Activated CD4-positive, alpha-beta memory T cell treated with anti-CD3 and anti-CD28 coated beads for 36 hours (primary cell): ENCODE measurements at regions of chr5 and their contacts with region 1.

Region 1: DNA sequence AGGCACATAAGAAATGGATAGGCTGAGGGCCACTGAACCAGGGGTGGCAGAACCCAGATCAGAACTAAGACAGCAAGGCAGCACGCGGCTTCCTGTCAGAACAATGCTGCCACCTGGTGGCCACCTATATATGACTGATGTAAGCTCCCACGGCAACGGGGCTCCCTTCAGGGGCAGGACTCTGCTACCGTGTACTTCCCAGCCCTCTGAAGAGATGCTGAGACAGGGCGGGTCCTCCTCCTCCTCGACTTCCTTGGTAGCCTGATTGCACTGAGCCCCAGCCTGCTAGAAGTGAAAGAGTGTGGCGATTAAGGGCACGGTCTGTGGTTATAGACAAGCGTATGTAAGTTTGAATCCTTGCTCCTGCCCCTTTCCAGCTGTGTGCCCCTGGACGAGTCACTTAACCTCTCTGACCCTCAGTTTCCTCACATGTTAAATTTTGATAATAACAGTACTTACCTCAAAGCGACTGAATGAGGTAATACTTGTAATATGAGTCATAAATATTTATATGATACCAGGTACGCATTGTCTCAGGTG is 13.3 kb downstream of the RPS14 start:
- DNase-seq: peak; percentile 92
- H3K4me3 Mint-ChIP-seq: no peak overlapping the region
- H3K27ac Mint-ChIP-seq: peak overlapping the region; percentile 46
- H3K4me1 Mint-ChIP-seq: peaks cover 9% of the 10 kb centered on the region
- H3K27me3 Mint-ChIP-seq: no peaks in the 10 kb centered on the region

Region 2: DNA sequence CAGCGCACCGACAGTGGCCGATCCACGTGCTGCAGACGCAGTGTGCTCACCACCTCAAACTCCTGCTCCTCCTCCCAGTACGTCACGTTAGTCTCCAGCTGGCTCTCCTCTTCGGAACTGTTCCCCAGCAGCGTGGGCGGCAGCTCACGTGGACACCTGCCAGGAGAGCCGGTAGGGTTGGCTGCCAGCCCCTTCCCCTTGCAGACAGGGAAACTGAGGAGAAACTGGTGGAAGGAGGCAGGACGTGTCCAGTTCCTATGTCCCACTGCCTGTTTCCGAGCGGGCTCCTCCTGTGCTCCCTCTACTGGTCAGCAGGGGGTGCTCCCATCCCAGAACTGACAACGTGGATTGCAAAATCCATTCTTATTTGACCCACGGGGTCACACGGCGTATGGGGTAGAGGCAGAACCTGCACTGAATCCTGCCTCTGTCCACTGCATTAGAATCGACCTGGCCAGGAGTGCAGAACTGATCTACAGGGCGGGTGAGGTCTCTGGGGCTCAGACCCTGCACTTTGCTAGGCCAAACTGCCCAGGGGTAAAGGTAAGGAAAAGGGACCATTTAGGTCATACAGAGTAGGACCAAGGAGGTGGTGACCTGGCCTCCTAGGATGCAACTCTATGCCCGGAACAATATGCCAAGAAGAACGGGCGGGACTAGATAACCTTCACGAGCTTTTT is 306.3 kb before region 1 on chr5:
- CTCF ChIA-PET with region 1: no interaction called
- POLR2A ChIA-PET with region 1: no interaction called
- intact Hi-C with region 1: loop called (anchors 1 kb)
- DNase-seq: peak; percentile 68
- H3K4me3 Mint-ChIP-seq: no peak overlapping the region
- H3K27ac Mint-ChIP-seq: no peak overlapping the region
- H3K4me1 Mint-ChIP-seq: no peaks in the 10 kb centered on the region
- H3K27me3 Mint-ChIP-seq: no peaks in the 10 kb centered on the region

Region 3: GRCh38 chr5:150217873-150218692 is 218.1 kb before region 1 on chr5:
- CTCF ChIA-PET with region 1: interaction called, 5 read pairs
- POLR2A ChIA-PET with region 1: no interaction called
- intact Hi-C with region 1: loop called (anchors 2 kb)
- DNase-seq: peak; percentile 87
- H3K4me3 Mint-ChIP-seq: no peak overlapping the region
- H3K27ac Mint-ChIP-seq: no peak overlapping the region
- H3K4me1 Mint-ChIP-seq: no peaks in the 10 kb centered on the region
- H3K27me3 Mint-ChIP-seq: peaks cover 4% of the 10 kb centered on the region

Region 4: DNA sequence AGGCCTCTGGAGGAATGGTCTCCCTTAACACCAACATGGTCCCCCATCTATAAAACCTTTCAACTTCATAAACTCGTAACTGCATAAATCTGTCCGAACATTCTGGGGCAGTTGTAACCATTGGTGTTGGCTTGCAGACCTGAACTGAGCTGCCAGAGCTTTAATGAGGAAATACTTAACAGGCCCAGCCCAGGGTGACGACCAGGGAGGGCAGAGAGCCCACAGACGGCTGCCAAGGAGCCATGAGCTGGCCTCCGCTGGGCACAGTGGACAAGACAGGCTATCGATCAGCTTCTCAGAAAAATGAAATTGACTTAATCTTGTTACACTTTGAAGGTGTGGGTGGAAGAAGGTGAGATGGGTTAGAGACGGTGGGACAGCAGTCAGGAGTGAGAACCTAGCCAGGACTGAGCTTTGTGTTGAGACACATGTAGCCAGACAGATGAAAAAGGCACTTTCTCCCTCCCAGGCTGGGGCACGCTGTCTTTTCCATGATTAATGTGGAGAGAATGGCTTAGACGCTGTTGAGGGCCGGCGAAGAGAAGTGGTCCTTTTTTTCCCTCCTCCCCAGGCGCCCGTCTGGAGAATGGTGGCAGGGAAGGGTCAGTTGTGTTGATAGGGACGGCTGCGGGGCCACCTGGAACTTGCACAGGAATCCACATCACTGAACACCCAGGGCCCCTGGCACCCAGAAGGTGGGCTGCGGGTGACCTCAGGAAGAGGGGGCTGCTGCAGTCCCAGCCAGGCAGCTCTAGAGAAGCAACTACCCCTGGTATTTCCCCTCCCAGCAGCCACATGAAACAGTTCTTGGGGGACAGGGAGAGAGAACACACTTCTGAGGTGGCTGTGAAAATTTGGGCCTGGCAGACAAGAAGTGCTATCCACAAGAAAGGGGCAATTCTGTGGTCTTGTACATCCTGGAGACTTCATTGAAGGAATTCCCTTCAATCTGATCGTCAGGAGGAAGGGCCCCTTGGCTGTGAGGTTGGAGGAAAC is 106.0 kb before region 1 on chr5:
- CTCF ChIA-PET with region 1: no interaction called
- POLR2A ChIA-PET with region 1: no interaction called
- intact Hi-C with region 1: no loop called
- DNase-seq: no peak
- H3K4me3 Mint-ChIP-seq: no peak overlapping the region
- H3K27ac Mint-ChIP-seq: no peak overlapping the region
- H3K4me1 Mint-ChIP-seq: no peaks in the 10 kb centered on the region
- H3K27me3 Mint-ChIP-seq: no peaks in the 10 kb centered on the region

Region 5: DNA sequence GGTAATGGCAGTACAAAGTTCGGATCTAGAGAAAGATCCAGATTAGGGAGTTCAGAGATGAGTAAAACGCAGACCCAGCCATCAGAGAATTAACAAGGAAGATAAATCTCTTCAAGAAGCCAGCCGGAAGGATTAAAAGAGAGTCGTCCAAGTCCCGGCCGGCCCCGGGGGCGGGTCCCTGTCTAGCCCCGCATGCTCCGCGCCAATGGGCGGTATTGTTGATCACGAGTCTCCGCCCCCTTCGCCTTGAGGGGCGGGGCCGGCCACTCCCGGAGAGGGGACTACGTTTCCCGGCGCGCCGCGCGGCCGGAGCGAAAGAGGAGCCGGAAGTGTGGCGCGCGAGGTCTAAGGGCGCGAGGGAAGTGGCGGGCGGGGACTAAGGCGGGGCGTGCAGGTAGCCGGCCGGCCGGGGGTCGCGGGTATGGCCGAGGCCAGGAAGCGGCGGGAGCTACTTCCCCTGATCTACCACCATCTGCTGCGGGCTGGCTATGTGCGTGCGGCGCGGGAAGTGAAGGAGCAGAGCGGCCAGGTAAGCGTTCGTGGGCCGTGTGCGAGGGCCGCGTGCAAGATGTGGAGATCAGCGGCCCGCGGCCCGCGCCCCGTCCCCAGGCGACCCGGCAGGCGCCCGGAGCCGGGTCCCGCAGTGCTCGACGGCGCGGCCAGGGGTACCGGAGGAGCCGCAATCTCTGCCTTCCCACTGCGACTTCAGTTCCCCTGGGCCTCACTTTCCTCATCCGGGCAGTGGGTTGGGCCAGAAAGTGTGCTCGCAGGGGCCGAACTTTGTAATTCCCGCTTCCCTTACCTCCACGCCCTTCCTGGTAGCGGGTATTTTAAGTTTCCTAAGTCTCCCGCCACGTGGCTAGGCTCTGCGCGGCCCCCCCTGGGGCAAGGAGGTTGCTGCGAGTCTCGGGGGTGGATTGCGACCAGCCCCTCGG is 78.6 kb before region 1 on chr5 and contains the start of gene TCOF1:
- CTCF ChIA-PET with region 1: interaction called, 4 read pairs
- POLR2A ChIA-PET with region 1: no interaction called
- intact Hi-C with region 1: loop called (anchors 1 kb)
- DNase-seq: peak; percentile 98
- H3K4me3 Mint-ChIP-seq: peak within 1 kb of the TSS; percentile 89
- H3K27ac Mint-ChIP-seq: peak within 1 kb of the TSS; percentile 81
- H3K4me1 Mint-ChIP-seq: peaks cover 35% of the 10 kb centered on the region
- H3K27me3 Mint-ChIP-seq: no peaks in the 10 kb centered on the region
- total RNA-seq, gene TCOF1: 91.3 to 95.0 TPM

Region 6: DNA sequence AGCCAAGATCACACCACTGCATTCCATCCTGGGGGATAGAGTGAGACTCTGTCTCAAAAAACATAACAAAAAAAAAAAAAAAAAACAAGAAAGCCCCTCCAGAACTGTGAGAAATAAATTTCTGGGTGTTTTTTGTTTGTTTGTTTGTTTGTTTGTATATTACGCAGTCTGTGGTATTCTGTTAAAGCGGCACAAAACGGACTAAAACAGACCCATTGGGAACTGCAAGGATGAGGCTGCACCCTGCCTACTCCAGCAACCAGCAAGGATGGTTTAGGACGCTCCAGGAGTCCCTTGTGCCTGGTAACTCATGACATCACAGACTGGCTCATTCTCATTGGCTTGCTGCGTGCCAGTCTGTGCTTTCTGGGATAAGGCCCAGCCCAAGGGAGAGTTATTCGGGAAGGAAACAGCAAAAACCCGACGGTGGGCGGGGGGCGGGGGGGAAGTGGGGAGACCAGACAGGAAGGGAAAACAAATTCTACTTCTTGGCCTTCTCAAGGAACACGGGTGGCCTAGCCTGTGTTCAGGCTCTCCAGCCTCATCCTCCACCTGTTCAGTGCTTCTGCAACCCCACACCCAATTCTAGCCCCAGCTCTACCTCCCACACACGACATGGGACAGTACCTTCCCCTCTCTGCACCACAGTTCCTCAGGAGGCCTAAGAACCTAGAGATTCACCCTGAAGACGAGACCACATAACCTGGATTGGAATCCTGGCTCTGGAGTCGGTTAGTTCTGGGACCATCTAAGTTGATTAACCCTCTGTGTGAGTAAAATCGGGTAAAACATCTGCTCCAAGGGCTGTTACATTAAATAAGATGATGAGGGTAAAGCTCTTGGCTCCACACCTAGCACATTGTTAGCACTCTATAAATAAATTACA is 26.3 kb before region 1 on chr5:
- CTCF ChIA-PET with region 1: interaction called, 21 read pairs
- POLR2A ChIA-PET with region 1: interaction called, 5 read pairs
- intact Hi-C with region 1: loop called (anchors 1 kb)
- DNase-seq: peak; percentile 70
- H3K4me3 Mint-ChIP-seq: peak overlapping the region; percentile 97
- H3K27ac Mint-ChIP-seq: peak overlapping the region; percentile 99
- H3K4me1 Mint-ChIP-seq: peaks cover 39% of the 10 kb centered on the region
- H3K27me3 Mint-ChIP-seq: no peaks in the 10 kb centered on the region